Heart right ventricle (tissue), 16 donors: ENCODE measurements at regions of chr3 and their contacts with region 1.

Region 1: DNA sequence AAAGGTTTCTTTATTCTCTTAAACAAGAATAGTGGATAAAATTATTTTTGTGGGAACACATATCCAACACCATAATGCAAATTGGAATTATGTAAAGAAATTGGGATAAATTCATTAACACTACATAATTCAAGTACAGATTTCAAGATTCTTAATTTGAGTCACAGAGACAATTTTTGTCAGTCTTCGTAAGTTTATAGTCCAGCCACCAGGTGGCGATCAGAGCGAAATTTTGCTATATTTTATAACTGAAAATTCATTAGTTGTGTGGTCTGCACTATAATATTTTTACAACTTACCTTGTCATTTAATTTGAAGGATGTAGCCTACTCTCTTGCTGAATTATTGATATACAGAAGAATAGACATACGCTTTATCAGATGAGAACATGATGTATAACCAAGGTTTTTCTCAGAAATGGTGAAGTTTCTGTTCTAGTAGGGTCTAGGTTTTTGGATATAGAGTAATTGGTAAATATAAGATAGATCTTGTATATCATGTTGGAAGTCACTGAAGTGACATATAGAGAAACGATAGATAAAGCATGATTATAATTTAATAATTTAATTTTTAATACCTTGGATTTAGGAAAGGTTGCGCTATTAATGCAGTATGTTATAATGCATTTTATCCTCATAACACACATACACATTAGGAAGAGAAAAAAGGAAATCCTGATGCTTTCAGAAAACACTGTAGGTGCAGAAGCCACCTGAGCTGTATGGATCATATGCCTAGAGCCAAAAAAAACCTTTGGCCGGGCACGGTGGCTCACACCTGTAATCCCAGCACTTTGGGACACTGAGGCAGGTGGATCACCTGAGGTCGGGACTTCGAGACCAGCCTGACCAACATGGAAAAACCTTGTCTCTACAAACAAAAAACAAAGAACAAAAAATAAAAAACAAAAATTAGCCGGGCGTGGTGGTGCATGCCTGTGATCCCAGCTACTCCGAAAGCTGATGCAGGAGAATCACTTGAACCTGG is 31.7 kb downstream of the PLSCR4 start:
- DNase-seq: peak; percentile 17 to 30
- ATAC-seq: no peak
- H3K4me3 ChIP-seq: no peak overlapping the region
- H3K27ac ChIP-seq: no peak overlapping the region
- H3K4me1 ChIP-seq: peaks cover 0 to 29% (median 11%) of the 10 kb centered on the region in 9 donors
- H3K27me3 ChIP-seq: no peaks in the 10 kb centered on the region
- CTCF ChIP-seq: peak; percentile 59 to 85 (median 77)

Region 2: GRCh38 chr3:146250449-146251382 is 31.5 kb after region 1 on chr3 and contains the start of gene PLSCR4:
- intact Hi-C with region 1: loop called in 2 of 10 experiments (anchors 1 to 5 kb)
- DNase-seq: peak; percentile 86 to 87
- ATAC-seq: peak; percentile 95 to 98 (median 96)
- H3K4me3 ChIP-seq: peak within 1 kb of the TSS; percentile 54 to 84 (median 68)
- H3K27ac ChIP-seq: peak within 1 kb of the TSS; percentile 83 to 92 (median 90)
- H3K4me1 ChIP-seq: peaks cover 0 to 38% (median 18%) of the 10 kb centered on the region in 9 donors
- H3K27me3 ChIP-seq: peaks cover 0 to 20% (median 0%) of the 10 kb centered on the region in 7 donors
- CTCF ChIP-seq: no peak
- total RNA-seq, gene PLSCR4: 8.1 to 16.4 (median 12.0) TPM

Region 3: GRCh38 chr3:146256851-146257486 is 37.8 kb after region 1 on chr3:
- intact Hi-C with region 1: loop called in 1 of 10 experiments (anchors 5 kb)
- DNase-seq: no peak
- ATAC-seq: no peak
- H3K4me3 ChIP-seq: no peak overlapping the region
- H3K27ac ChIP-seq: no peak overlapping the region
- H3K4me1 ChIP-seq: peaks cover 0 to 6% (median 4%) of the 10 kb centered on the region in 9 donors
- H3K27me3 ChIP-seq: no peaks in the 10 kb centered on the region
- CTCF ChIP-seq: no peak

Region 4: GRCh38 chr3:146277953-146278631 is 58.9 kb after region 1 on chr3:
- intact Hi-C with region 1: loop called in 1 of 10 experiments (anchors 2 kb)
- DNase-seq: peak in 1 of 2 donors; percentile 50
- ATAC-seq: peak in 7 of 8 donors; percentile 60 to 83 (median 79)
- H3K4me3 ChIP-seq: no peak overlapping the region
- H3K27ac ChIP-seq: peak overlapping the region in 4 of 10 donors; percentile 7 to 38 (median 30)
- H3K4me1 ChIP-seq: peaks cover 0 to 35% (median 14%) of the 10 kb centered on the region in 9 donors
- H3K27me3 ChIP-seq: peaks cover 0 to 4% (median 0%) of the 10 kb centered on the region in 7 donors
- CTCF ChIP-seq: no peak

Region 5: DNA sequence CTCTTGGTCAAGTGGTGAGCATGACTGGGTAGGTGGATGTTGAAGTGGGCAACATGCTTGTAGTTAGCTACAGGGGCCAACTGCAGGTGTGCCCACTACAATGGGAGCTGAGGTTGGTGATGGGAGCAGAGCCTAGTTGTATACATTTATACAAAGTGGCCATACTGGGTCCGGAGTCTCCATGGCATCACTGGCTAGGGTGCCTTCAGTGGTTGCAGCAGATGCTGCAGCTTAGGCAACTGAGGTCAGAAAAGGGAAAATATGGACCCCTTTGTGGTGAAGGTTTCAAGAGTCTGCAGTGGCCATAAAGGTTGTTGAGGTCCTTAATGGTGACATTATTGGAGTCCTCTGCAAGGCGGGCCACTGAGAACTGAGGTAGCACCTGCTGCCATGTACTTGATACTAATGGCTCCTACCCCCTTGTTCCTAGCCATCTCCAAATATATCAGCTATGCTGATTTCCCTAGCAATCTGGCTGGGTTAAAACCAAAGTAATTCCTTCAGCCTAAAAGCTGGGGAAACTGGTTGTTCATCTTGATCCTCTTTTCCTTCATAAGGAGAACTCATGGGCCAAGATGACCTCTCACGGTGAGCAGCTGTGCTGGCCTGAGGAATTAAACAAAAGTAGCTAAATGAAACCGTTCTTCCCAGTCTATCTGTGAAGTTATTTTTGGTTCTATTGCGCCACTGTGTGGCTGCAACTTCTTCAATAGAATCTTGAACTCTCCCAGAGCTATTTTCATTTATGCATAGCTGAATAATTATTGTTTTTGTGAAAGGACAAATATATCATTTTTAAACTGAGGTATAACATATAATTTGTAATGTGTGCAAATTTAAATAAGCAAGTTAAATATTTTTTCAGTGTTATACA is 107.7 kb after region 1 on chr3:
- intact Hi-C with region 1: loop called (anchors 1 to 5 kb)
- DNase-seq: peak in 1 of 2 donors; percentile 46
- ATAC-seq: peak in 7 of 8 donors; percentile 75 to 92 (median 87)
- H3K4me3 ChIP-seq: no peak overlapping the region
- H3K27ac ChIP-seq: no peak overlapping the region
- H3K4me1 ChIP-seq: no peaks in the 10 kb centered on the region
- H3K27me3 ChIP-seq: no peaks in the 10 kb centered on the region
- CTCF ChIP-seq: peak; percentile 9 to 80 (median 65)

Region 6: GRCh38 chr3:146561879-146562278 is 342.7 kb after region 1 on chr3:
- intact Hi-C with region 1: loop called in 1 of 10 experiments (anchors 10 kb)
- DNase-seq: no peak
- ATAC-seq: no peak
- H3K4me3 ChIP-seq: no peak overlapping the region
- H3K27ac ChIP-seq: no peak overlapping the region
- H3K4me1 ChIP-seq: peaks cover 0 to 19% (median 0%) of the 10 kb centered on the region in 9 donors
- H3K27me3 ChIP-seq: no peaks in the 10 kb centered on the region
- CTCF ChIP-seq: no peak

Region 7: GRCh38 chr3:146577662-146578061 is 358.5 kb after region 1 on chr3:
- intact Hi-C with region 1: loop called in 9 of 10 experiments (anchors 1 to 10 kb)
- DNase-seq: peak in 1 of 2 donors; percentile 19
- ATAC-seq: peak in 2 of 8 donors; percentile 51 to 56
- H3K4me3 ChIP-seq: no peak overlapping the region
- H3K27ac ChIP-seq: no peak overlapping the region
- H3K4me1 ChIP-seq: no peaks in the 10 kb centered on the region
- H3K27me3 ChIP-seq: no peaks in the 10 kb centered on the region
- CTCF ChIP-seq: peak in 7 of 9 donors; percentile 35 to 66 (median 58)